Right ventricle myocardium superior (tissue), 1 donor: ENCODE measurements at regions of chr11 and their contacts with region 1.

Region 1: GRCh38 chr11:18731949-18732821 is 6.2 kb upstream of the IGSF22 start:
- DNase-seq: peak; percentile 62
- ATAC-seq: peak; percentile 60

Region 2: DNA sequence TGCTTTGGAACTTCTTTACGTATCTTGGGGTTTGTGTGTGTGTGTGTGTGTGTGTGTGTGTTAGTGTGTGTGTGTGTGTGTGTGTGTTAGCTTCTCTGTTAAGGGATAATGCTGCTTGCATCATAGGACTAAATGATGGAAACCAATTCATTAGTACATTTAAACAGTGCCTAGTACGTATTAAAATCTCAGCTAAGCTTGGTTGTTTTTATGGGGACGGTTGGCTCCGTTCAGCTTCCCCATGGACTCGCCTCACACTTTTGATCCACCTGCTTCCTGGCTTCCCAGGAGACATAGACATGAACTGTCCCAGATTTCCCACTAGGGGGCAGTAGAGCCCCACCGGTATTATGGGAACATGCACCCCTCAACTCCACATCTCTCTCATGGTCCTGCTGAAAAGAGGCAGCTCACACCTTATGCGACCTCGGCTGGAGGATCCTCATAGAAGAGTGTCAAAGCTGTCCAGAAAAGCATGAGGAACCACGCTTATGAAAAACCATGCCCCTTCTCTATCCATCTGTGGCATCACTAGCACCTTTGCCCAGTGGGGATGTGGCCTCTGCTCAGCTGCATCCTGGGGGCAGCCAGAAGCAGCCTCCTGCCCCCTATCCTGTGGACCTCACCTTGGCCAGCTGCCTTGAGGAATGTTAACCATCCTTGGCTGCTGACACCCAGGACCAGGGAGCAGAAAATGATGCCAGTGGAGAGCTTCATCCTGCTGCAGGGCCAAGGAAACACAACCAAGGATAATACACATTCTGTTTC is 616.6 kb before region 1 on chr11:
- intact Hi-C with region 1: loop called (anchors 10 kb)
- DNase-seq: no peak
- ATAC-seq: peak; percentile 87

Region 3: GRCh38 chr11:18536191-18536674 is 196.0 kb before region 1 on chr11:
- intact Hi-C with region 1: loop called (anchors 10 kb)
- DNase-seq: no peak
- ATAC-seq: no peak